ENCODE measurements at regions of chr3 and their contacts with region 1.

Region 1: GRCh38 chr3:52536369-52537164 is at the start of gene UQCC5:
- DNase-seq: peak; percentile 99
- ATAC-seq: peak; percentile 92
- total RNA-seq, gene UQCC5: 71.2 TPM

Region 2: GRCh38 chr3:52190294-52191074 is 346.1 kb before region 1 on chr3:
- intact Hi-C with region 1: no loop called
- DNase-seq: peak; percentile 58
- ATAC-seq: peak; percentile 41

Region 3: DNA sequence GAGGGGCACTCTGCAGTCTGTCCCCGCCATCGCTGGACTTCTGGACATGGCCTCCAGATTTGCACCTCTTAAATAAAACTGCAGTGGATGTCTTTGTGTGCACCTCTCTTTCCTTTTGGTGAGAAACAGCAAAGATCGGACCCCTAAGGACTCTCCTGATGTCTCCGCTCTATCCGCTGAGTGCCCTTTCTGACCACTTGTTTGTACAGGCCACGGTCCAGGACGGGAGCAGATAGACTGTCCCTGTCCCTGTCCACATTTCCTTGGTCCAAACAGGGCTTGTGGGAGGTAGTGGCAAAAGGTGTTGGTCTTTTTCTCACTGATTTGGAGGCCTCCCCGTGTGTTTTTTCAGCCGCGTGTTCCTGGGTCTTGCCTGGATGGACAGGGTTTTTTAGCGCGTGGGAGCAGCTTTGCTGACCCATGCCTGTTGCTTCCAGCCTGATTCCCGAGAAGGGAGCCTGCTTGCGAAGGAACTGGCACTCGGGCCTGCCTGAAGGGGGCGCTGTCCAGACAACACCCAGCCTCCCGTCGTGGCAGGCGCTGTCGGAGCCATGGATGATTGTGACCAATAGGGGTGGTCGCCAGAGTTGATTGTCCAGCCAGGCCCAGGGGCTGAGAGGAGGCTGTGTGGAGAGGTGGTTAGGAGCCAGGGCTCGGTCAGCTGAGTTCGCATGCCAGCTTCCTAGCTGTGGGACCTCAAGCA is 54.6 kb before region 1 on chr3:
- intact Hi-C with region 1: loop called (anchors 5 kb)
- DNase-seq: no peak
- ATAC-seq: no peak